Naive thymus-derived CD4-positive, alpha-beta T cell (primary cell): ENCODE measurements at regions of chr4 and their contacts with region 1.

Region 1: DNA sequence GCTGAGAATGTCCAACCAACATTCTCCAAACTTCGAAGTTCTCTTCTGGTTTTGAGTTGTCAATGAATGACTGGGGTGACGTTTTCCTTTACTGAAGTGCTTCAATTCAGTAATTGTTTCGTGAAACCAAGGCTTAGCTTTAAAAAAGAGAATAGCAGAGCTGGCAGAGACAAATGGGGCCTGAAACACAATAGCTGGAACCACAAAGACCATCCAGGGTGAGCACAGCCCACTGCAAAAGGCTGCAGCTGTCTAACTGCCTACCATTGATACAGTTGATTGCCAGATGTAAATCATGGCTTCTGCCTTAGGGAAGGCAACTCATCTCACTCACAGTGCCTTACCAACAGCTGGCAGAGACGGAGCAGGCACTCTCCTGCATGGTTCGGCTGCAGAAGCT is 78.7 kb upstream of the ZNF518B start:
- DNase-seq: no peak
- ATAC-seq: no peak
- H3K4me3 ChIP-seq: no peak overlapping the region
- H3K4me3 Mint-ChIP-seq: no peak overlapping the region
- H3K27ac ChIP-seq: no peak overlapping the region
- H3K27ac Mint-ChIP-seq: no peak overlapping the region
- H3K4me1 ChIP-seq: no peaks in the 10 kb centered on the region
- H3K4me1 Mint-ChIP-seq: no peaks in the 10 kb centered on the region
- H3K27me3 ChIP-seq: no peaks in the 10 kb centered on the region
- H3K27me3 Mint-ChIP-seq: peaks cover 0 to 7% (median 4%) of the 10 kb centered on the region in 5 donors

Region 2: GRCh38 chr4:9762823-9763475 is 773.0 kb before region 1 on chr4:
- CTCF ChIA-PET with region 1: no interaction called
- POLR2A ChIA-PET with region 1: no interaction called
- intact Hi-C with region 1: loop called in 1 of 2 experiments (anchors 5 kb)
- DNase-seq: peak in 8 of 9 donors; percentile 5 to 56 (median 34)
- ATAC-seq: no peak
- H3K4me3 ChIP-seq: no peak overlapping the region
- H3K4me3 Mint-ChIP-seq: no peak overlapping the region
- H3K27ac ChIP-seq: no peak overlapping the region
- H3K27ac Mint-ChIP-seq: no peak overlapping the region
- H3K4me1 ChIP-seq: no peaks in the 10 kb centered on the region
- H3K4me1 Mint-ChIP-seq: no peaks in the 10 kb centered on the region
- H3K27me3 ChIP-seq: no peaks in the 10 kb centered on the region
- H3K27me3 Mint-ChIP-seq: peaks cover 11 to 35% (median 26%) of the 10 kb centered on the region in 5 donors

Region 3: DNA sequence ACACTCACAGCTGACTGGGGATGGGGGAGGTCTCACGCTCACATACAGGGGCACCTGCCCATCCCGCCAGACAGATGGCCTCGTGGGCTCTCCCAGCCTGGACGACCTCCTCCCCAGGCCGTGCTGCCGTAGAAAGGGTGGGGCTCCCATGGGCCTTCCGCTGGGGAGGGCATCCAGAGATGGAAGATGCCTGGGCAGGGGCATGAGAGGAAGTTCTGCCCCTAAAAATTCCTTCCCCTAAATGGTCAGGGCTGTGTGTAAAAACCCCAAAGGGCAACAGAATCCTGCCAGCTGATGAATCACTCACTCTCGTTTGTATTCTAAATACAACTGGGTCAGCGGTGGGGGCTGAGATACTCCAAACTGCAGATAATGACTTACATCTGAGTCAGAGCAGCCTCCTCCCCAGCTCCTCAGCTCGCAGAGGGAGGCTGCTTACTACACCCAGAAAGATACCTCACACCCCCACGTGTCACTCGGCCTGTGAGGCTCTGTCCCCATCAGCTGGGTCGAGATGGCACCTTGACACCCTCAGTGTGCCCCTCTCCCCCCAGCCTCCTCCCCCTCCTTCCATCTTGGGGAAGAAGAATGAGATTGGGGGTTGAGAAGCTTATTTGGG is 429.4 kb before region 1 on chr4:
- CTCF ChIA-PET with region 1: no interaction called
- POLR2A ChIA-PET with region 1: no interaction called
- intact Hi-C with region 1: loop called in 1 of 2 experiments (anchors 5 kb)
- DNase-seq: peak in 2 of 9 donors; percentile 59 to 69
- ATAC-seq: peak; percentile 83
- H3K4me3 ChIP-seq: peak overlapping the region; percentile 27
- H3K4me3 Mint-ChIP-seq: peak overlapping the region; percentile 29 to 97 (median 70)
- H3K27ac ChIP-seq: peak overlapping the region; percentile 66
- H3K27ac Mint-ChIP-seq: peak overlapping the region; percentile 50 to 93 (median 89)
- H3K4me1 ChIP-seq: peaks cover 79 to 94% of the 10 kb centered on the region in 2 donors
- H3K4me1 Mint-ChIP-seq: peaks cover 88 to 100% (median 98%) of the 10 kb centered on the region in 7 donors
- H3K27me3 ChIP-seq: no peaks in the 10 kb centered on the region
- H3K27me3 Mint-ChIP-seq: no peaks in the 10 kb centered on the region

Region 4: GRCh38 chr4:10157478-10158332 is 378.2 kb before region 1 on chr4:
- CTCF ChIA-PET with region 1: interaction called, 7 read pairs
- POLR2A ChIA-PET with region 1: no interaction called
- intact Hi-C with region 1: loop called (anchors 1 kb)
- DNase-seq: peak in 7 of 9 donors; percentile 4 to 37 (median 32)
- ATAC-seq: peak; percentile 63
- H3K4me3 ChIP-seq: no peak overlapping the region
- H3K4me3 Mint-ChIP-seq: peak overlapping the region in 5 of 10 donors; percentile 19 to 48 (median 25)
- H3K27ac ChIP-seq: no peak overlapping the region
- H3K27ac Mint-ChIP-seq: peak overlapping the region in 7 of 9 donors; percentile 12 to 86 (median 60)
- H3K4me1 ChIP-seq: peaks cover 8 to 39% of the 10 kb centered on the region in 2 donors
- H3K4me1 Mint-ChIP-seq: peaks cover 14 to 57% (median 50%) of the 10 kb centered on the region in 7 donors
- H3K27me3 ChIP-seq: no peaks in the 10 kb centered on the region
- H3K27me3 Mint-ChIP-seq: no peaks in the 10 kb centered on the region

Region 5: GRCh38 chr4:10164877-10165283 is 371.0 kb before region 1 on chr4:
- CTCF ChIA-PET with region 1: interaction called, 6 read pairs
- POLR2A ChIA-PET with region 1: no interaction called
- intact Hi-C with region 1: loop called in 1 of 2 experiments (anchors 2 kb)
- DNase-seq: no peak
- ATAC-seq: no peak
- H3K4me3 ChIP-seq: no peak overlapping the region
- H3K4me3 Mint-ChIP-seq: no peak overlapping the region
- H3K27ac ChIP-seq: no peak overlapping the region
- H3K27ac Mint-ChIP-seq: peak overlapping the region in 1 of 9 donors; percentile 62
- H3K4me1 ChIP-seq: peaks cover 8 to 30% of the 10 kb centered on the region in 2 donors
- H3K4me1 Mint-ChIP-seq: peaks cover 14 to 41% (median 32%) of the 10 kb centered on the region in 7 donors
- H3K27me3 ChIP-seq: no peaks in the 10 kb centered on the region
- H3K27me3 Mint-ChIP-seq: no peaks in the 10 kb centered on the region